PC-3 (cell line): ENCODE measurements at regions of chr12 and their contacts with region 1.

Region 1: GRCh38 chr12:28652239-28652638 is 462.0 kb downstream of the CCDC91 start:
- DNase-seq: peak; percentile 16
- ATAC-seq: no peak
- H3K4me3 ChIP-seq: peak overlapping the region; percentile 19
- H3K27ac ChIP-seq: no peak overlapping the region
- H3K4me1 ChIP-seq: peaks cover 3% of the 10 kb centered on the region; the same call in 1 of the 2 replicates
- H3K27me3 ChIP-seq: no peaks in the 10 kb centered on the region
- CTCF ChIP-seq: no peak

Region 2: DNA sequence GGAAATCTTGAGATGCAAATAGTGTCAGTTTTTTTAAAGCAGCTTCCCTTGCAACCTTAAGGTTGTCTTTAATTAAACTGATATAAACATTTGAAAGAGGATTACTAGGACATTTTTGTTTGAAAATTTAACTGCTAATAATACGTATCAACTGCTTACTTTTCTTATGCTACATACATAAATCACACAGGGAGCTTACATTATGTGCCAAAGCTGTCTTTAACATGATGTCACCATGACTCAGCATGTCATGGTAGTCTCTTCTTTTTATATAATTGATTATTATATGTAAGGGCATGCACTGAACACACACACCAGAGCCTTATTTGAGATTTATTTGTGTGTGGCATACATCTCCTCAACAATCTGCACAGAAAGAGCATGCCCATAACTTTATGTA is 616.7 kb before region 1 on chr12:
- CTCF ChIA-PET with region 1: no interaction called
- POLR2A ChIA-PET with region 1: no interaction called
- intact Hi-C with region 1: loop called (anchors 5 kb)
- DNase-seq: peak; percentile 100
- ATAC-seq: peak; percentile 52
- H3K4me3 ChIP-seq: no peak overlapping the region
- H3K27ac ChIP-seq: peak overlapping the region; percentile 77
- H3K4me1 ChIP-seq: peaks cover 40% of the 10 kb centered on the region
- H3K27me3 ChIP-seq: no peaks in the 10 kb centered on the region
- CTCF ChIP-seq: no peak

Region 3: DNA sequence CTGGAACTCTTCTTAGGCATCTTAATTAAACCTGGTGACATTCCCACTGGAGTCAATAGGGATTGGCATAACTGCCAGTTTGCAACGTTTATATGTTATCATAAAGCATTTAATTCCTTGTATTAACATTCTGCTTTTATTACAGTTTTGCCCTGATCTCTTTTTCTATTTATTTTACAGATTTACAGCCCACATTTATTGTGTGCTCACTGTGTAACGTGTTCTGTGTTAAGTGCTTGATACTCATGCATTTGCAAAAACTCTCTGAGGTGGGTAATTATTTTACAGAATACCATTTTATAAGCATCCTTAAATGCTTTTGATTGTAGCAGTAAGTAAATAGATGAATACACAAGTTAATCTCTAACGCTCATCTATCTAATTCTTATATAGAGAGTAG is 155.3 kb after region 1 on chr12:
- CTCF ChIA-PET with region 1: no interaction called
- POLR2A ChIA-PET with region 1: no interaction called
- intact Hi-C with region 1: loop called (anchors 5 kb)
- DNase-seq: no peak
- ATAC-seq: peak; percentile 79
- H3K4me3 ChIP-seq: no peak overlapping the region
- H3K27ac ChIP-seq: no peak overlapping the region
- H3K4me1 ChIP-seq: no peaks in the 10 kb centered on the region
- H3K27me3 ChIP-seq: no peaks in the 10 kb centered on the region
- CTCF ChIP-seq: no peak

Region 4: GRCh38 chr12:28963554-28963953 is 311.3 kb after region 1 on chr12:
- CTCF ChIA-PET with region 1: no interaction called
- POLR2A ChIA-PET with region 1: interaction called, 3 read pairs
- intact Hi-C with region 1: loop called (anchors 2 kb)
- DNase-seq: peak; percentile 95
- ATAC-seq: peak; percentile 63
- H3K4me3 ChIP-seq: no peak overlapping the region
- H3K27ac ChIP-seq: no peak overlapping the region
- H3K4me1 ChIP-seq: peaks cover 19% of the 10 kb centered on the region
- H3K27me3 ChIP-seq: no peaks in the 10 kb centered on the region
- CTCF ChIP-seq: peak; percentile 100